ENCODE measurements at regions of chr7 and their contacts with region 1.

Region 1: DNA sequence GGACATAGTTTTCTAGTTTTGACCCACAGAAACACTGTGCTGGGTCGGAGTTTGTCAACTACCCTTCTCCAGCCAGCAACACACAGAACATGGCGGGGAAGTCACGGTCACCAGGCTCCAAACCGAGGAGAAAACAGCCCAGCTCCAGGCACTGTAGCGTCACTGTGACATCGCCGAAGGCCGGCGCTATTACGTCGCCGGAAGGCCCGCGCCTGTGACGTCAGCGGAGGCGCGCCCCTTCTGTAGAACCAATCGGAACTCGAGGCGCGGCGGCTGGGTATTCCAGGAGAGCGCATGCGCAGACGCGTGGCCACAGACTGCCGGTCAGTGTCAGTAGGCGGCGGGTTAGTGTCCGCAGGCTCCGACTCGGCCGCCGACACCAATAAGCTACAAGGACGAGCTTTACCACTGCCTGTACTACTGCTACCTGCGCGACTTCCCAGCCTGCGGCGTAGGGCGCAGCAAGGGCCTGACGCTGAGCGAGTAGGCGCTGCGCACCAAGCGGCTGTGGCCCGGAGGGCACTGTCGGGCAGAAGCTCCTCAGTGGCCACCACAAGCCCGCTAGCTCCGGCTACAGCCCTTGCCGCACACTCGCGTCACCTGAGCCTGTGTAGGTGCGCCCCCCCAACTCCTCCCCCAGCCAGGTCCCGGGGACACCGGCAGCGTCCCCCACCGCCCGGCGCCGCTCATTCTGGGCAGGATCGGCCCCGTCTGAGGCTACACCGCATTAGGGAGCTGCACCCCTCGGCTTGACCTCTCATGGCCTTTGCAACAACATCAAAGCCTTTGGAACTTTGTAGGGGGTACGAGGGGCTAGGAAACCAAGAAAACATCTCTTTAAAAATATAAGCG is 35.1 kb upstream of the SRRM3 start:
- DNase-seq: peak; percentile 95 to 97
- ATAC-seq: peak; percentile 98
- H3K4me3 ChIP-seq: peak overlapping the region; percentile 68 to 91 (median 72)
- H3K27ac ChIP-seq: peak overlapping the region; percentile 87 to 98 (median 94)
- H3K4me1 ChIP-seq: peaks cover 0 to 7% of the 10 kb centered on the region in 2 donors
- H3K27me3 ChIP-seq: no peaks in the 10 kb centered on the region
- CTCF ChIP-seq: peak in 2 of 5 experiments; percentile 20 to 35
- POLR2A ChIP-seq: peak; percentile 90 to 92

Region 2: GRCh38 chr7:76054128-76055120 is 112.2 kb before region 1 on chr7:
- in situ Hi-C with region 1: no loop called
- intact Hi-C with region 1: loop called (anchors 10 kb)
- DNase-seq: peak; percentile 41 to 90
- ATAC-seq: peak; percentile 76 to 83
- H3K4me3 ChIP-seq: no peak overlapping the region
- H3K27ac ChIP-seq: peak overlapping the region; percentile 54 to 94 (median 78)
- H3K4me1 ChIP-seq: peaks cover 63 to 77% of the 10 kb centered on the region in 2 donors
- H3K27me3 ChIP-seq: no peaks in the 10 kb centered on the region
- CTCF ChIP-seq: no peak
- POLR2A ChIP-seq: no peak

Region 3: GRCh38 chr7:76086070-76086469 is 80.6 kb before region 1 on chr7:
- in situ Hi-C with region 1: no loop called
- intact Hi-C with region 1: no loop called
- DNase-seq: no peak
- ATAC-seq: no peak
- H3K4me3 ChIP-seq: no peak overlapping the region
- H3K27ac ChIP-seq: no peak overlapping the region
- H3K4me1 ChIP-seq: no peaks in the 10 kb centered on the region
- H3K27me3 ChIP-seq: no peaks in the 10 kb centered on the region
- CTCF ChIP-seq: no peak
- POLR2A ChIP-seq: no peak

Measured in gastrocnemius medialis (tissue), 4 donors.